ENCODE measurements at regions of chr9 and their contacts with region 1.

Region 1: GRCh38 chr9:113454914-113455761 is 8.4 kb upstream of the RGS3 start:
- DNase-seq: no peak
- H3K4me3 ChIP-seq: no peak overlapping the region
- H3K4me3 Mint-ChIP-seq: no peak overlapping the region
- H3K27ac ChIP-seq: no peak overlapping the region
- H3K27ac Mint-ChIP-seq: peak overlapping the region in 4 of 7 donors; percentile 19 to 61 (median 45)
- H3K4me1 ChIP-seq: no peaks in the 10 kb centered on the region
- H3K4me1 Mint-ChIP-seq: peaks cover 0 to 6% (median 0%) of the 10 kb centered on the region in 4 donors
- H3K27me3 ChIP-seq: no peaks in the 10 kb centered on the region
- H3K27me3 Mint-ChIP-seq: no peaks in the 10 kb centered on the region

Region 2: DNA sequence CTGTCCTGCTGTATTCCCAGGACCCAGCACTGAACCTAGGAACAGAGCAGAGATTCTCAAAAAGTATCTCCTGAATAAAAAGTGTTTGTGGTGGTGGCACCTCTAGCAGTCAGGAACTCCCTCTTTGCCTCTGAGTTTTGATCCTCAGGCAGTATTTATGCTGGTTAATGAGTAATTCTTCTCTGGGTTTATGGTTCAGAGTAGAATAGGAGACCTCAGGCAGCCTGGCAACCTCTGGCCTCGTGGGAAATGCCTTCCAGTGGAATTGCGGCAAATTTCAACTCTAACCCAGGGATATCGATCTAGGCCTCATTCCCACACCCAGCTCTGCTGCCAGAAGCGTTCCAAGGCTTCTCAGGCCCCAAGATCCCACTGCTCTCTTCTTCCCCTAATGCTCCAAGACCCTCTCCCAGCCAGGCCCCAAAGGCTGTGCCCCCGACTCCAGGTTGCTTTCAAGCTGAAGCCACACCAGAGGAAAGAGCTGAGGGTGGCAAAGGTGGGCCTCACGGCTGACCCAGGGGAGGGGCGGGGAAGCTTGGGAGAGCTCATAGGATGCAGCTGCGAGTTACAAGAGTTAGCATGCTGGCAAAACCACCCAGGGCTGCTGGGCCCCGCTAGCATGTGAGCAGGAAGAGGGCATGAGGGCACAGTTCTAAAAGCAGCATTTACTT is 67.4 kb before region 1 on chr9:
- CTCF ChIA-PET with region 1: no interaction called
- POLR2A ChIA-PET with region 1: no interaction called
- intact Hi-C with region 1: no loop called
- DNase-seq: no peak
- H3K4me3 ChIP-seq: no peak overlapping the region
- H3K4me3 Mint-ChIP-seq: no peak overlapping the region
- H3K27ac ChIP-seq: no peak overlapping the region
- H3K27ac Mint-ChIP-seq: peak overlapping the region in 1 of 7 donors; percentile 29
- H3K4me1 ChIP-seq: no peaks in the 10 kb centered on the region
- H3K4me1 Mint-ChIP-seq: no peaks in the 10 kb centered on the region
- H3K27me3 ChIP-seq: no peaks in the 10 kb centered on the region
- H3K27me3 Mint-ChIP-seq: no peaks in the 10 kb centered on the region

Region 3: DNA sequence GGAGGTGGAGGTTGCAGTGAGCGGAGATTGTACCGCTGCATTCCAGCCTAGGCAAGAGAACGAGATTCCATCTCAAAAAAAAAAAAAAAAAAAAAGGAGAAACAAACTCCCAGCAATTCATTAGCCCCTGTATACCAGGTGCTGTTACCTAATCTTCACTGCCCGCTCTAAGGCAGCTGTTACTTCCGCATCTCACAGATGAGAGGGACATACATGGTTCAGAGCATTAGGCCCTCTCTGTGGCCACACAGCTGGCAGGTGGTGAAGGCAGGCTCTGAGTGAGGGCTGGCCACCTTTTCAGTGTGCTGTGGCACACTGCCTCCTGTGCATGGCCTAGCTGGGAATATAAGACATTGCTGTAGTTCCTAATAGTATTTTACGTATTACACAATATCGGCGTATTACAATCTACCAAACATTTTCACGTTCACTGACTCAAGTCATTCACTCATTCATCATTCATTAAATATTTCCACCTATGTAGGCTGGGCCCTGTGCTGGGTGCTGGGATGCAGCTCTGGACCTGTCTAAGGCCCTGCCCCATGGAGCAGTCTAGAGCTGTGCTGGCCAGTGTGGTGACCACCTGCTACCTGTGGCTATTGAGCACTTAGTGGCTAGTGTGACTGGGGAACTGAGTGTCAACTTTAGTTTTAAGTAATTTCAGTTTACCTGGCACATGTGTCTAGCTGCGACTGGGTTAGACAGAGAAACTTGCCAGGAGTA is 44.2 kb after region 1 on chr9:
- CTCF ChIA-PET with region 1: no interaction called
- POLR2A ChIA-PET with region 1: no interaction called
- intact Hi-C with region 1: loop called (anchors 5 kb)
- DNase-seq: no peak
- H3K4me3 ChIP-seq: no peak overlapping the region
- H3K4me3 Mint-ChIP-seq: no peak overlapping the region
- H3K27ac ChIP-seq: no peak overlapping the region
- H3K27ac Mint-ChIP-seq: peak overlapping the region in 2 of 7 donors; percentile 24 to 67
- H3K4me1 ChIP-seq: no peaks in the 10 kb centered on the region
- H3K4me1 Mint-ChIP-seq: peaks cover 2 to 9% (median 5%) of the 10 kb centered on the region in 4 donors
- H3K27me3 ChIP-seq: no peaks in the 10 kb centered on the region
- H3K27me3 Mint-ChIP-seq: no peaks in the 10 kb centered on the region